Naive thymus-derived CD4-positive, alpha-beta T cell (primary cell): ENCODE measurements at regions of chr1 and their contacts with region 1.

Region 1: DNA sequence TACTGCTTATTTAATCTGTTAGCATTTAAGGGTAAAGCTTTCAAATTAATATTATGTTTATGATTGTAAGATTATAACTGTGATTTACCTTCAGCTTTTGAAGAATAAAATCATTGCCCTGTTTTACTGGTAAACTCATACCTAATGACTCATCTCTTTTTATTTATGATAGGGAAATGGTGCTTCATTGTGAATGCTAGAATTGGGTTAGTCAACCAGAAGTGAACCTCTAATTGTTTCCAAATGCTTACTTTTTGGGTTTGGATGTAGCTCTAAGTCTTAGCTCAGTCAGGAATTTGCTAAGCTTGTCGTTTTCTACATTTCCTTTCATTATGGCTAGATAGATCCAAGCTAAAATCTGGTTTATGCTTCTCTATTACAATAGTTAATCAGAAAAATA is 59.4 kb downstream of the SLC30A7 start:
- DNase-seq: no peak
- ATAC-seq: no peak
- H3K4me3 ChIP-seq: no peak overlapping the region
- H3K4me3 Mint-ChIP-seq: peak overlapping the region in 2 of 10 donors; percentile 18 to 22
- H3K27ac ChIP-seq: no peak overlapping the region
- H3K27ac Mint-ChIP-seq: no peak overlapping the region
- H3K4me1 ChIP-seq: peaks cover 5 to 6% of the 10 kb centered on the region in 2 donors
- H3K4me1 Mint-ChIP-seq: peaks cover 17 to 74% (median 57%) of the 10 kb centered on the region in 7 donors
- H3K27me3 ChIP-seq: no peaks in the 10 kb centered on the region
- H3K27me3 Mint-ChIP-seq: no peaks in the 10 kb centered on the region

Region 2: DNA sequence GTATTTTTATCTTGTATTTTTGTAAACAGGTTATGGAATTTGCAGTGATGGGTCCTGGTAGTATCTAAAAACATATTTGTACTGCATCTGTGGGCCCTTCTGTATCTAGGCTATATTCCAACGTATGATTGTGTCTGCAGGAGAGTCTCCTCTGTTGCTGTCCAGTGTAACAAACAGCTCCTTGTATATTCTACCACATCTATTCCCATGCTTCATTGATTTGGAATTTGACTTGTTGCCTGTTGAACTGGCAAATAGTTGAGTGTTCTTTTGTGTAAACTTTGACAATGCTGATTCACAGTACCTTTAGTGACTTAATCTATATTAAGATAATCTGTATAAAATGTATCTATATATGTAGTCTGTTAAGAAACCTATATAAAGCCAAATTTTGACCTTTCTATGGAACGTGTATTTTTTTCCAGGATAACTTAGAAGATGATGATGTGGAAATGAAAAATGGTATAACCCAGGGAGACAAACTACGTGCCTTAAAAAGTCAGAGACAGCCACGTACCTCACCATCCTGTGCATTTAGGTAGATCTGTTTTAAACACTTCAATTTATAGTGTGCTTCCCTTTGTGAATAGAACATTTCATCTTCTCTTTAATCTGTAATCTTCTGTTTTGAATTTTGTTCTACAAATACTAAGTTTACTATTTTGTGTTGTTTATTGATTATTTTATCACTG is 460.8 kb before region 1 on chr1:
- CTCF ChIA-PET with region 1: no interaction called
- POLR2A ChIA-PET with region 1: no interaction called
- intact Hi-C with region 1: no loop called
- DNase-seq: no peak
- ATAC-seq: no peak
- H3K4me3 ChIP-seq: no peak overlapping the region
- H3K4me3 Mint-ChIP-seq: no peak overlapping the region
- H3K27ac ChIP-seq: no peak overlapping the region
- H3K27ac Mint-ChIP-seq: peak overlapping the region in 4 of 9 donors; percentile 7 to 34 (median 14)
- H3K4me1 ChIP-seq: no peaks in the 10 kb centered on the region
- H3K4me1 Mint-ChIP-seq: peaks cover 0 to 19% (median 9%) of the 10 kb centered on the region in 7 donors
- H3K27me3 ChIP-seq: no peaks in the 10 kb centered on the region
- H3K27me3 Mint-ChIP-seq: no peaks in the 10 kb centered on the region

Region 3: DNA sequence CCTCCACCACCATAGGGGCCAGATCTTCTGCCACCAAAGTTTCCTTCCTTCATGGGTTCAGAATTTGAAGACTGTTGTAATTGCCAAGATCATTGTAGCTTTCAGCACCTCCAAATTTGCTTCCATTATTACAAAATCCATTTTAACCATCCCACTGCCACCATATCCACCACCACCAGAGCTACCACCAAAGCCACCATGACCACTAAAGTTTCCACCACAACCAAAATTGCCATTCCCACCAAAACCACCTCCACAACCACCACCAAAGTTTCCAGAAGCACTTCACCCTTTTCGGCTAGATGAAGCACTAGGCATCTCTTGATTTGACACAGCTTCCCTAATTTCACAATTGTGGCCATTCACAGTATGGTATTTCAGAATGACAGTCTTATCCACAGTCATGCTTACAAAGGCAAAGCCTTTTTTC is 14.2 kb before region 1 on chr1:
- CTCF ChIA-PET with region 1: no interaction called
- POLR2A ChIA-PET with region 1: interaction called, 27 read pairs
- intact Hi-C with region 1: loop called in 1 of 2 experiments (anchors 1 kb)
- DNase-seq: peak in 1 of 9 donors; percentile 56
- ATAC-seq: no peak
- H3K4me3 ChIP-seq: no peak overlapping the region
- H3K4me3 Mint-ChIP-seq: peak overlapping the region; percentile 61 to 82 (median 72)
- H3K27ac ChIP-seq: no peak overlapping the region
- H3K27ac Mint-ChIP-seq: peak overlapping the region; percentile 87 to 99 (median 95)
- H3K4me1 ChIP-seq: peaks cover 5 to 35% of the 10 kb centered on the region in 2 donors
- H3K4me1 Mint-ChIP-seq: peaks cover 38 to 75% (median 69%) of the 10 kb centered on the region in 7 donors
- H3K27me3 ChIP-seq: no peaks in the 10 kb centered on the region
- H3K27me3 Mint-ChIP-seq: peaks cover 0 to 2% (median 0%) of the 10 kb centered on the region in 5 donors

Region 4: GRCh38 chr1:100972185-100972584 is 16.9 kb after region 1 on chr1:
- CTCF ChIA-PET with region 1: no interaction called
- POLR2A ChIA-PET with region 1: interaction called, 9 read pairs
- intact Hi-C with region 1: loop called in 1 of 2 experiments (anchors 1 kb)
- DNase-seq: no peak
- ATAC-seq: no peak
- H3K4me3 ChIP-seq: no peak overlapping the region
- H3K4me3 Mint-ChIP-seq: peak overlapping the region in 2 of 10 donors; percentile 11 to 44
- H3K27ac ChIP-seq: no peak overlapping the region
- H3K27ac Mint-ChIP-seq: peak overlapping the region in 5 of 9 donors; percentile 10 to 74 (median 31)
- H3K4me1 ChIP-seq: peaks cover 0 to 19% of the 10 kb centered on the region in 2 donors
- H3K4me1 Mint-ChIP-seq: peaks cover 15 to 73% (median 55%) of the 10 kb centered on the region in 7 donors
- H3K27me3 ChIP-seq: no peaks in the 10 kb centered on the region
- H3K27me3 Mint-ChIP-seq: no peaks in the 10 kb centered on the region